Transverse colon (tissue), 4 donors: ENCODE measurements at regions of chr17 and their contacts with region 1.

Region 1: DNA sequence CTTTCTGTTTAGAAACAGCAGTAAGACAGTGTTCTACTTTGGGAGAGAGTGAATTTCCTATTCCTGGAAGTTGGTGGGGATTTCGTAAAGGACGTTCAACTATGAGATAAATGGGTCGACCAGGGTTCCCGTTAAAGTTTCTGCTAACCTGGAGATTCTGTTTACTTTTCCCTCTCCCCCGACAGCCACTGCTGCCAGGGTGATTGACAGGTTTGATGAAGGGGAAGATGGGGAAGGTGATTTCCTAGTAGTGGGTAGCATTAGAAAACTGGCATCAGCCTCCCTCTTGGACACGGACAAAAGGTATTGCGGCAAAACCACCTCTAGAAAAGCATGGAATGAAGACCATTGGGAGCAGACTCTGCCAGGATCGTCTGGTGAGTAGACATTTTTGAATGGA is 1.3 kb downstream of the AATF start:
- DNase-seq: no peak
- H3K4me3 ChIP-seq: peak overlapping the region in 3 of 4 donors; percentile 74 to 89 (median 75)
- H3K27ac ChIP-seq: no peak overlapping the region
- H3K4me1 ChIP-seq: peaks cover 10 to 27% (median 18%) of the 10 kb centered on the region in 4 donors
- H3K27me3 ChIP-seq: peaks cover 29% of the 10 kb centered on the region
- CTCF ChIP-seq: no peak
- EP300 ChIP-seq: no peak
- POLR2A ChIP-seq: no peak

Region 2: GRCh38 chr17:36937966-36938565 is 12.0 kb before region 1 on chr17:
- in situ Hi-C with region 1: no loop called
- intact Hi-C with region 1: no loop called
- DNase-seq: no peak
- H3K4me3 ChIP-seq: peak overlapping the region in 1 of 4 donors; percentile 23
- H3K27ac ChIP-seq: no peak overlapping the region
- H3K4me1 ChIP-seq: peaks cover 37 to 68% (median 64%) of the 10 kb centered on the region in 4 donors
- H3K27me3 ChIP-seq: peaks cover 100% of the 10 kb centered on the region
- CTCF ChIP-seq: no peak
- EP300 ChIP-seq: no peak
- POLR2A ChIP-seq: no peak

Region 3: DNA sequence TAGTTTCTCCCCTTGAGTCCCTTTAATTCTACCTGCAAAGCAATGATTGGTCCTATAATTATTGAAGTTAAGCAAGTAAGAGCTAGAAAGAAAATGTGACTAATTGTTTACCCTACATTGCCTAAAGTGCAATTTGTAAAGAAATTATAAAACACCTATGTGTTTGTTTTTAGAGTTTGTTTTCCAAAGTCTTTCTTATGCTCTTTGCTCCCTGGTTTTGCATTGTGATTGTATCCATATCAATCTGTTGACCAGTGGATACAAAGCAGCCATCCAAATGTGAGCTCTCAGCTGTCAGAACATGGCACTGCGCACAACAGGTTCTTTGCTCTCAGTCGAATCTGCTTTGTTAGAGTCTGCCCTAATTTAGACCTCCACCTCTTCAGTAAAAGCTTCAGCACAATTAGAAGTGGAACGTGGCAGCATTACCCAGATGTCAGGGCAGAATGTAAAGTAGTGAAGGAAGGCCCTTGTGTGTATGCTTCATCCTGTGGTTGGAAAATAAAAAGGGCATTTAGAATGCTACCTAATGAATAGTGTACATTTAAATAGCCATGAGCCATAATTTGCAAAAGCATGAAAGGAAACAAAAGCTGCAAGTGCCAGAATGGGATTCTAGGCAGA is 69.2 kb after region 1 on chr17:
- in situ Hi-C with region 1: loop called in 1 of 4 experiments (anchors 10 kb)
- intact Hi-C with region 1: no loop called
- DNase-seq: no peak
- H3K4me3 ChIP-seq: no peak overlapping the region
- H3K27ac ChIP-seq: no peak overlapping the region
- H3K4me1 ChIP-seq: no peaks in the 10 kb centered on the region
- H3K27me3 ChIP-seq: no peaks in the 10 kb centered on the region
- CTCF ChIP-seq: no peak
- EP300 ChIP-seq: no peak
- POLR2A ChIP-seq: no peak